Panc1 (cell line): ENCODE measurements at regions of chr11 and their contacts with region 1.

Region 1: GRCh38 chr11:76700177-76701100 is 29.9 kb upstream of the LRRC32 start:
- DNase-seq: no peak
- ATAC-seq: no peak
- H3K4me3 ChIP-seq: no peak overlapping the region
- H3K27ac ChIP-seq: no peak overlapping the region
- H3K4me1 ChIP-seq: no peaks in the 10 kb centered on the region
- H3K27me3 ChIP-seq: no peaks in the 10 kb centered on the region
- CTCF ChIP-seq: no peak

Region 2: DNA sequence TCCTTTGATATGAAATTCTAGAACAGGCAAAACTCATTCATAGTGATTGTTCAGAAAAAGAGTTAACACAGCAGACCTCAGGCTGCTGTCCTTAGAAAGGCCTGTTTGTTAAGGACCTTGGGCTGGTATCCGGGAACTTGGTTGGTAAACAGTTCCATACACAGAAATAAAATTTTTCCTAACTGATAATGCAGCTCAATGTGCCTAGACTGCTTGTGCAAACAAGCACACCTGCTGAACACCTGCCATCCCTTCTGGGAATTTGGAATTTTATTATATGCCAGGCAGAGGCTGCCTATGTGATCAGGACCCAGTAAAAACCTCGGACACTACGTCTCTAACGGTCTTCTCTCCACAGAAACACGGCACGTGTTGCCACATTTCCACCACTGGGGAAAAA is 331.0 kb before region 1 on chr11:
- CTCF ChIA-PET with region 1: interaction called, 14 read pairs
- POLR2A ChIA-PET with region 1: no interaction called
- in situ Hi-C with region 1: no loop called
- intact Hi-C with region 1: no loop called
- DNase-seq: no peak
- ATAC-seq: no peak
- H3K4me3 ChIP-seq: no peak overlapping the region
- H3K27ac ChIP-seq: no peak overlapping the region
- H3K4me1 ChIP-seq: peaks cover 34% of the 10 kb centered on the region
- H3K27me3 ChIP-seq: no peaks in the 10 kb centered on the region
- CTCF ChIP-seq: no peak

Region 3: DNA sequence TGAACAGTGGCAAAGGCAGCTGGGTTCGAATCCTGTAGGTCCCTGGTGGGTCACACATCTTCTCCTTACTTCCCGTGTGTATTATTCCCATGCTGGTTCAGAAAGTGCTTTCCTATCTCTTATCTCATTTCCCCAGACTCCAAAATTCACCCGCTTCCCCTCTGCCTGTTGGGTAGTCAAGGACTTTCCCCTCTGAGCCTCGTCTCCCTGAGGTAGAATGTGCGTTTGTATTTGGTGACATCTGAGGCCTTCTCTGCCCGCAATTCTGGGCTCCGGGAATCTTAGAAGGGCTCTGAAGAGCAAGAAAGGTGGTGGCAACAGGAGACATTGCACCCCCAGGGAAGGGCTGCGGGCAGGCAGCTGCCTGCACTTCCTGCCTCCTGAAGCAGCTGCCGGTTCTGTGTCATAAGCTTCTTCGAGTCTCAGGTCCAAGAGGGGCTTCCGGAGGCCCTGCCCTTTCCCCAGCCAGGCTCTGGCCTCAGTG is 35.8 kb before region 1 on chr11:
- CTCF ChIA-PET with region 1: no interaction called
- POLR2A ChIA-PET with region 1: no interaction called
- in situ Hi-C with region 1: no loop called
- intact Hi-C with region 1: loop called (anchors 2 kb)
- DNase-seq: no peak
- ATAC-seq: no peak
- H3K4me3 ChIP-seq: no peak overlapping the region
- H3K27ac ChIP-seq: no peak overlapping the region
- H3K4me1 ChIP-seq: no peaks in the 10 kb centered on the region
- H3K27me3 ChIP-seq: peaks cover 4% of the 10 kb centered on the region
- CTCF ChIP-seq: no peak

Region 4: GRCh38 chr11:76714499-76714898 is 14.1 kb after region 1 on chr11:
- CTCF ChIA-PET with region 1: no interaction called
- POLR2A ChIA-PET with region 1: no interaction called
- in situ Hi-C with region 1: no loop called
- intact Hi-C with region 1: no loop called
- DNase-seq: no peak
- ATAC-seq: no peak; the same call in 1 of the 2 replicates
- H3K4me3 ChIP-seq: no peak overlapping the region
- H3K27ac ChIP-seq: no peak overlapping the region
- H3K4me1 ChIP-seq: no peaks in the 10 kb centered on the region
- H3K27me3 ChIP-seq: no peaks in the 10 kb centered on the region
- CTCF ChIP-seq: no peak